ENCODE measurements at regions of chr4 and their contacts with region 1.

Region 1: DNA sequence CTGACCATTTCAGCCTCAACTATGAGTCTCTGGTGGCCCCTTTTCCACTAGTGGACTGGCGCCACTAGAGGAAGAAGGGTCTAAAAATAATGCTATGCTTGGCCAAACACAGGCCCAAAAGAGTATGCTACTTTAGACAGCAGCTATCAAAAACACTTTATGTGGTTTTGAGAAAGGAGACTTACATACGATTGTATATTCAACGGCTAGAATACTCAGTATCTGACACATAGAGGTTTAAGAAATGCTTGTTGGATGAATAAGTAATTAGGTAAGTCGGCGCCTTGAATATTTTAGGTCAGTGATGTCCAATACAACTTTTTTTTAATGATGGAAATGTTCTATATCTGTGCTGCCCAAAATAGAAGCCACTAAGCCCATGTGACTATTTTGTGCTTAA is 25.7 kb upstream of the TMPRSS11A start:
- DNase-seq: no peak
- ATAC-seq: no peak
- H3K4me3 ChIP-seq: no peak overlapping the region
- H3K27ac ChIP-seq: no peak overlapping the region
- H3K4me1 ChIP-seq: no peaks in the 10 kb centered on the region
- H3K27me3 ChIP-seq: no peaks in the 10 kb centered on the region
- CTCF ChIP-seq: no peak
- POLR2A ChIP-seq: no peak
- RAD21 ChIP-seq: no peak

Region 2: DNA sequence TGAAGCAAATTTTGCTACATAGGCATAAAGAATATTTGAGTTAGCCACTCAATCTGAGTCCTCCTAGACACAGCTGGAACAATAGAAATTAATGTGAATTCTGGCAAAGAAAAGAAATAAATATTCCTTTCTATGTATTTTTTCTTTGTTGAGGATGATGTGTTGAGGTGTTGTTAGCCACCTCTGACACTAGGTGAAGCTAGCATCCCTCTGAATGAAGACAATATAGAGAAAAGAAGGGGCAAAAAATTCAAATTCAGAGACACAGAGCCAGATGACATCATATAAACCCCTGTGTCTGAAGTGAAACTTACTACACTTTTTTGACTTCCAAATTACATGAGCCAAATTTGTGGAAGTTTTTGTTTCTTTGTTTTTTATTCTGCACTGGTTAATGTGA is 70.6 kb before region 1 on chr4:
- CTCF ChIA-PET with region 1: no interaction called
- POLR2A ChIA-PET with region 1: no interaction called
- RAD21 ChIA-PET with region 1: no interaction called
- intact Hi-C with region 1: loop called (anchors 2 kb)
- DNase-seq: peak; percentile 13
- ATAC-seq: peak; percentile 72
- H3K4me3 ChIP-seq: no peak overlapping the region
- H3K27ac ChIP-seq: no peak overlapping the region
- H3K4me1 ChIP-seq: no peaks in the 10 kb centered on the region
- H3K27me3 ChIP-seq: no peaks in the 10 kb centered on the region
- CTCF ChIP-seq: peak; percentile 47 to 73 (median 51); a peak in 5 of 6 replicates
- POLR2A ChIP-seq: no peak
- RAD21 ChIP-seq: peak; percentile 73